GM12878 (cell line): ENCODE measurements at regions of chr5 and their contacts with region 1.

Region 1: DNA sequence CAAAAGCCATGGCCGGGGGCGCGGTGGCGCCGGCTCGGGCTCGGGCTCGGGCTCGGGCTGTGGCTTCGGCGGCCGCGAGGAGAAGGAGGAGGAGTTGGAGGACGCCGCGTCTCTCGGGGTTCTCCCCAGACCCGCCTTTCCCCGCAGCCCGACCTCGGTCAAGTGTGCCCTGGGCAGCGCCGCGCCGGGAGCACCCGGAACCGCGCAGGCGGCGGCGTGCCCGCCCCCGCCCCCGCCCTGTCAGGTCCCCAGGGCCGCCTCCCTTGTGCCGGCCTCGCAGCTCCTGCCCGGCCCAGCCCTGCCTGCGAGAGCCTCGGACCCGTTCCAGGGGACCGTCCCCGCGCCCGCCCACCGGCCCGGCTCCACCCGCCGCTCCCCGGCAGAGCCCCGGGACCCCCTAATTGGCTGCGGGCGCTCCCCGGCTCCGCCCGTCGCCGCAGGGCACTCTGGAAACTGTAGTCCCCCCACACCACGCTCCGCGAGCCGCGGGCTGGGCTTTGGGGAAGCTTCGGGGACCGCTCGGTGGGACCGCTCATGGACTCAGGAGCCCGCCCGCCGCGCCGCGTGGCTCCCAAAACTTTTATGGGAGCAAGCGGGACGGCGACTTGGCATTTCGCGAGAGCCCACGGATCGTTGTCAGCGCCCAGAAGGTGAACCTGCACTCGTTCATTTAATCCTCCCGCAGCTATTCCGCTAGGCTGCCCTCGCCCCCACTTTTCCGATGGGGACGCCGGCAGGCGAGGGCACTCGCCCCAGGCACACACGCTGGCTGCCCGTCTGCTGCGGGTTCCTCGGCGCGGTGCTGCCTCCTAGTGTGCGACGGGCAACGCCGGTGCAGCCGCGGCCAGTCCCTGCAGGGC is at the start of gene STK10:
- DNase-seq: no peak
- ATAC-seq: peak; percentile 84
- H3K4me3 ChIP-seq: peak within 1 kb of the TSS; percentile 89
- H3K27ac ChIP-seq: peak within 1 kb of the TSS; percentile 68
- H3K4me1 ChIP-seq: peaks cover 20% of the 10 kb centered on the region
- H3K27me3 ChIP-seq: no peaks in the 10 kb centered on the region
- CTCF ChIP-seq: peak; percentile 80 to 99 (median 89); a peak in 5 of 6 replicates
- EP300 ChIP-seq: 0 out of 4 replicates have a peak, but pooled peaks of 1 of the 2 experiments have one; percentile 3
- POLR2A ChIP-seq: peak; percentile 65
- RAD21 ChIP-seq: peak; percentile 85
- polyA plus RNA-seq, gene STK10: 14.2 to 20.4 TPM

Region 2: DNA sequence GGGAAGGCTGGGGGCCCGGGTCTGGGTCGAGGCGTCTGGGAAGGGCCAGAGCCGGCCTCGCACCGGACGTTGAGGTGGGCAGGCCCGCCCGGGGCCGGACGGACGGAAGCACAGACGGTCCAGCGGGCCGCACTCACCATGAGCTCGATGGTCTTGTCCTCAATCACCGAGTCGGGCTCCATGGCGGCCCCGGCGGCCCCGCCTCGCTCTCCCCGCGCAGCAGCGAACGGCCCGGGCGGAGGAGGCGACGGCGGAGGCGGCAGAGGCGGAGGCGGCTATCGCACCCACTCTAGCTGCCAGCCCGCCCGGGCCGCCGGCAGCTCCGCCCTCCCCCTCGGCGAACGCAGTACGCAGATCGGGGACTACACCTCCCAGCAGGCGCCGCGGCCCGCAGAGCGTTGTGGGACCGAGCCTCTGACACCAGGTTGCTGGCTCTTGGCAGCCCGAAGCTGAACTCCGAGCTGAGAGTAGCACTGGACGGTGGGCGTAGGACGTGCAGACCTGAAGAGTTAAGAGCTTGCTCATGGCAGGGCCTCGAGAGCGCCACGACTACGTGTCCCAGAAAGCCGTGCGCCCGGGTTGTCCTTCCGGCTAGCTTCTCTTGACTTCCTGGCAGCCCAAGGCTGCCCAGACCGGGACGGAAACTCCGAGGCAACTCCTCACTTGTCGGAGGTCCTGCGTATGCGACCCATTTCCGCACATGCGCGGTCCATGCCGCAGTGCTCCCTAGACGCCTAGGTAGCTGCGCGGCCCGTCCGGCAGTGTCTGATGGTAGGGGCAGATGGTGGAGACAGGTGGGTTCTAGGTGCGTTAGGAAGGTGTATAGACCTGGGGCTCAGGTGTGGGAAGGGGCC is 181.7 kb before region 1 on chr5 and contains the start of gene FBXW11:
- CTCF ChIA-PET with region 1: interaction called, 21 read pairs
- POLR2A ChIA-PET with region 1: interaction called, 4 read pairs
- RAD21 ChIA-PET with region 1: interaction called, 21 read pairs
- SMC1A ChIA-PET with region 1: interaction called, 4 read pairs
- in situ Hi-C with region 1: loop called (anchors 5 kb)
- intact Hi-C with region 1: loop called (anchors 2 kb)
- DNase-seq: peak; percentile 87
- ATAC-seq: peak; percentile 89
- H3K4me3 ChIP-seq: peak within 1 kb of the TSS; percentile 100
- H3K27ac ChIP-seq: peak within 1 kb of the TSS; percentile 98
- H3K4me1 ChIP-seq: peaks cover 28% of the 10 kb centered on the region
- H3K27me3 ChIP-seq: no peaks in the 10 kb centered on the region
- CTCF ChIP-seq: no peak
- EP300 ChIP-seq: no peak
- POLR2A ChIP-seq: peak; percentile 97
- RAD21 ChIP-seq: no peak
- polyA plus RNA-seq, gene FBXW11: 4.3 to 7.7 TPM

Region 3: GRCh38 chr5:172106511-172107356 is 81.5 kb before region 1 on chr5:
- CTCF ChIA-PET with region 1: interaction called, 162 read pairs
- POLR2A ChIA-PET with region 1: interaction called, 115 read pairs
- RAD21 ChIA-PET with region 1: interaction called, 95 read pairs
- SMC1A ChIA-PET with region 1: interaction called, 165 read pairs
- in situ Hi-C with region 1: no loop called
- intact Hi-C with region 1: loop called (anchors 1 kb)
- DNase-seq: peak; percentile 9
- ATAC-seq: 0 out of 3 replicates have a peak, but pooled peaks have one; percentile 1
- H3K4me3 ChIP-seq: no peak overlapping the region
- H3K27ac ChIP-seq: no peak overlapping the region; the same call in 1 of the 2 replicates
- H3K4me1 ChIP-seq: peaks cover 34% of the 10 kb centered on the region
- H3K27me3 ChIP-seq: no peaks in the 10 kb centered on the region
- CTCF ChIP-seq: peak; percentile 92 to 99 (median 95)
- EP300 ChIP-seq: no peak
- POLR2A ChIP-seq: no peak
- RAD21 ChIP-seq: peak; percentile 98

Region 4: DNA sequence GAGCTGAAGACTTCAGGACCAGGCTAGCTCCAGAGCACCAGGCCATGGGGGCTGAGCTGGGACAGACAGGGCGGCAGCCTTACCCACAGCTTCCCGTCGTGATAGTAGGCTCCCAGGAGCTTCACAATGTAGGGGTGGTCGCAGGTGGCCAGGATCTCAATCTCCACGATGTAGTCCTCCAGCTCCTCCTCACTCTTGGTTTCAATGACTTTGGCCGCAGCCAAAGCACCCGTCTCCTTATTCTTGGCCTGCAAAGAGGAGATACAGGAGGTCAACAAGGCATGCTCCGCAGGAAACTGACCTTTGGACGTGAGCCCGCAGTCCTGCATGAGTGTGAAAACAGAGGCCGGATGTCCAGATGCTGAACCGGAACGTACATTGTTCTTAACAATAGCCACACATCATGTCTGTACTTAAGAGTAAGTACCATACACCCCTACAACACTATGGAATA is 31.7 kb before region 1 on chr5:
- CTCF ChIA-PET with region 1: interaction called, 6 read pairs
- POLR2A ChIA-PET with region 1: interaction called, 15 read pairs
- RAD21 ChIA-PET with region 1: interaction called, 11 read pairs
- SMC1A ChIA-PET with region 1: interaction called, 7 read pairs
- in situ Hi-C with region 1: no loop called
- intact Hi-C with region 1: no loop called
- DNase-seq: no peak
- ATAC-seq: no peak
- H3K4me3 ChIP-seq: no peak overlapping the region
- H3K27ac ChIP-seq: peak overlapping the region; percentile 39; the same call in 1 of the 2 replicates
- H3K4me1 ChIP-seq: peaks cover 44% of the 10 kb centered on the region
- H3K27me3 ChIP-seq: no peaks in the 10 kb centered on the region
- CTCF ChIP-seq: no peak
- EP300 ChIP-seq: no peak
- POLR2A ChIP-seq: no peak
- RAD21 ChIP-seq: no peak

Region 5: GRCh38 chr5:172223901-172224873 is 35.9 kb after region 1 on chr5:
- CTCF ChIA-PET with region 1: interaction called, 5 read pairs
- POLR2A ChIA-PET with region 1: interaction called, 5 read pairs
- RAD21 ChIA-PET with region 1: interaction called, 23 read pairs
- SMC1A ChIA-PET with region 1: interaction called, 4 read pairs
- in situ Hi-C with region 1: no loop called
- intact Hi-C with region 1: loop called (anchors 1 kb)
- DNase-seq: peak; percentile 95
- ATAC-seq: peak; percentile 90
- H3K4me3 ChIP-seq: 0 out of 2 replicates have a peak overlapping the region, but pooled peaks have one; percentile 5
- H3K27ac ChIP-seq: peak overlapping the region; percentile 94
- H3K4me1 ChIP-seq: peaks cover 25% of the 10 kb centered on the region
- H3K27me3 ChIP-seq: no peaks in the 10 kb centered on the region
- CTCF ChIP-seq: no peak
- EP300 ChIP-seq: no peak
- POLR2A ChIP-seq: no peak
- RAD21 ChIP-seq: no peak

Region 6: DNA sequence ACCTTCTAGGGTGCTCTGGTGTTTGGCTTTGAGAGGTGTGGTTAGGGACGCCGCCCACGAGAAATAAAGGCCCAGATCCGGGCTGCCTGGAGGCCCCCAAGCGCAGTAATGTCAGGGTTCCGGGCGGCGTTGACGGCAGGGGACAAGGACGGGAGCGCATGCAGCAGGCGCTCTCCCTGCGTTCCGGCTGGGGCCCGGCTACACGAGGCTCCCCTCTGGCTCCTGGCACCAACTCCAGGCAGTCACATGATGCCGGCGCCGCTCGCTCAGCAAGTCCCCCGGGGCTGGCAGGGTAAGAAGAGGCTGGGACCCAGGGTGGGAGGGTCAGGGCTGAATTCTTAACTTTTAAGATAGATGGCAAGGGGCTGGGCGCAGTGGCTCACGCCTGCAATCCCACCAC is 67.2 kb after region 1 on chr5:
- CTCF ChIA-PET with region 1: no interaction called
- POLR2A ChIA-PET with region 1: no interaction called
- RAD21 ChIA-PET with region 1: no interaction called
- SMC1A ChIA-PET with region 1: no interaction called
- in situ Hi-C with region 1: no loop called
- intact Hi-C with region 1: no loop called
- DNase-seq: no peak
- ATAC-seq: no peak
- H3K4me3 ChIP-seq: no peak overlapping the region
- H3K27ac ChIP-seq: no peak overlapping the region
- H3K4me1 ChIP-seq: no peaks in the 10 kb centered on the region
- H3K27me3 ChIP-seq: no peaks in the 10 kb centered on the region
- CTCF ChIP-seq: no peak
- EP300 ChIP-seq: no peak
- POLR2A ChIP-seq: no peak
- RAD21 ChIP-seq: no peak

Region 7: DNA sequence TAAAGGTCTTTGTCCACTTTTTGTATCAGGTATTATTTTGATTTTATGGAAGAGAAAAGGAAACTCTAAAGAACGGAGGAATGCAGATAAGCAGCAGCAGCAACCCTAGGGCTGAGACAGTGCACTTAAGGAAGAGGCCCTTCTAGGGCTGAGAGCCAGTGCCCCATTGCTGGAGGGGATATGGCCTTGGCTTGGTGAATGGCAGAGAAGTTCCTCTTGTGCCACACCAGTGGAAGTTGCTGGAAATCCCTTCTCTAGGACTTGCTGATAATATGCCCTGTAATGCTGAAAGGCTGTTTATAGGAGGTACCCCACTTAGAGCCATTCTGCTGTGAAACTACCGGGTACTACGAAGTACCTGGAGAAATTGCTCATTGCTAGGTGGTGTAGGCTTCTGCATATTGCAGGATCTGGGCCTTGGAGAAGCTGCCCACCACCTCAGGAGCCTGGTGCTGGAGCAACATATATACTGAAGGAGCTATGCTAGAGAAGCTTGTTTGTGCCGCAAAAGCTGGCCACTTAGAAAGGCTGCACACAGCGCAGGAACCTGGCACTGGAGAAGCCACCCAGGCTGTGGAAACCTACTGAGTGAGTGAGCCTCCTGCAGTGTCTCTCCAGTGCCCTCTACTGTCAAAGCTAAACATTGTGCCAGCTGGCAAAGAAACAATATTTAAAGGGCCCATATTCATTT is 104.9 kb after region 1 on chr5:
- CTCF ChIA-PET with region 1: interaction called, 11 read pairs
- POLR2A ChIA-PET with region 1: no interaction called
- RAD21 ChIA-PET with region 1: interaction called, 5 read pairs
- SMC1A ChIA-PET with region 1: interaction called, 9 read pairs
- in situ Hi-C with region 1: no loop called
- intact Hi-C with region 1: loop called (anchors 1 kb)
- DNase-seq: no peak
- ATAC-seq: peak; percentile 100
- H3K4me3 ChIP-seq: no peak overlapping the region
- H3K27ac ChIP-seq: no peak overlapping the region
- H3K4me1 ChIP-seq: no peaks in the 10 kb centered on the region
- H3K27me3 ChIP-seq: no peaks in the 10 kb centered on the region
- CTCF ChIP-seq: peak; percentile 87 to 94 (median 93)
- EP300 ChIP-seq: no peak
- POLR2A ChIP-seq: no peak
- RAD21 ChIP-seq: peak; percentile 98

Region 8: DNA sequence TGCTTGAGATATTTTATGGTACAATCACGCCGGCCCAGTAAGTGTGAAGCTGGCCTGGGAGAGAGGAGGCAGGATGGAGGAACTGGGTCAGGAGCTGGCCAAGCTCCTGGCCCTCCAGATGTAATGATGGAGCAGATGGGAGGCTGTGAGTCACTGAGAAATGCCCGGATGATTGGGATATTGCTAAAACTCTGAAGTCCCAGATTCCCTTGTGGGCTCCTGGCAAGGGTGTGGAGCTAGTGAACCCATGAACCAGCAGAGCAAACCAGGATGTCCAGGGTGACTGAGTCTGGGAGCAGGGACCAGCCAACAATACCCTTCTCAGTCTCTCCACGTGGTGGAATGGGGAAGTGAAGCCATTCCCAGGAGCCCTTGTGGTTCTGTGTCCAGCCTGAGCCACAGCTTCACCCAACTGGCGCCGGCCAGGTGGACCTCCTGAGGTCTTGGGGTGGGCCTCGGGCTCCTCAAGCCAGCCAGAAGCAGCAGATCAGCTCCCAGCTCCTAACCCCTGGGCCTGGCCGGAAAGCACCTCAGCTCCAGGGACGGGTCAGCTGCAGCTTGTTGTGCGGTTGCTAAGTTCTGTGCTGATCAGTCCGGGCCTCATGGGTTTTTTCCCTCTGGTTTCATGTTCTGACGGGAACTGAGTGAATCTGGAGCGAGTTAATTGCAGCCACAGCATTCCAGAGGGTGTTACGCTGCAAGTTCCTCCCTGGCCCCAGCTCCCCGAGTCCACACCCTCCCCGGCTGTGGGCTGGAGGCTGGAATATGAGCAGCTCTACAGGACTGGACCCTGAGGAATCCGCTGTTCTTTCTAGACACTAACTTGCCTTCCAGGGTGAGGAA is 545.1 kb after region 1 on chr5:
- CTCF ChIA-PET with region 1: no interaction called
- POLR2A ChIA-PET with region 1: no interaction called
- RAD21 ChIA-PET with region 1: no interaction called
- SMC1A ChIA-PET with region 1: no interaction called
- in situ Hi-C with region 1: no loop called
- intact Hi-C with region 1: no loop called
- DNase-seq: no peak
- ATAC-seq: no peak
- H3K4me3 ChIP-seq: no peak overlapping the region
- H3K27ac ChIP-seq: no peak overlapping the region
- H3K4me1 ChIP-seq: no peaks in the 10 kb centered on the region
- H3K27me3 ChIP-seq: peaks cover 0 to 2% of the 10 kb centered on the region in 2 experiments; a peak in 2 of 4 replicates
- CTCF ChIP-seq: no peak
- EP300 ChIP-seq: no peak
- POLR2A ChIP-seq: no peak
- RAD21 ChIP-seq: no peak